Activated B cell treated with CpG ODN at 0.5 μM for 24 hours (primary cell): ENCODE measurements at regions of chr2 and their contacts with region 1.

Region 1: DNA sequence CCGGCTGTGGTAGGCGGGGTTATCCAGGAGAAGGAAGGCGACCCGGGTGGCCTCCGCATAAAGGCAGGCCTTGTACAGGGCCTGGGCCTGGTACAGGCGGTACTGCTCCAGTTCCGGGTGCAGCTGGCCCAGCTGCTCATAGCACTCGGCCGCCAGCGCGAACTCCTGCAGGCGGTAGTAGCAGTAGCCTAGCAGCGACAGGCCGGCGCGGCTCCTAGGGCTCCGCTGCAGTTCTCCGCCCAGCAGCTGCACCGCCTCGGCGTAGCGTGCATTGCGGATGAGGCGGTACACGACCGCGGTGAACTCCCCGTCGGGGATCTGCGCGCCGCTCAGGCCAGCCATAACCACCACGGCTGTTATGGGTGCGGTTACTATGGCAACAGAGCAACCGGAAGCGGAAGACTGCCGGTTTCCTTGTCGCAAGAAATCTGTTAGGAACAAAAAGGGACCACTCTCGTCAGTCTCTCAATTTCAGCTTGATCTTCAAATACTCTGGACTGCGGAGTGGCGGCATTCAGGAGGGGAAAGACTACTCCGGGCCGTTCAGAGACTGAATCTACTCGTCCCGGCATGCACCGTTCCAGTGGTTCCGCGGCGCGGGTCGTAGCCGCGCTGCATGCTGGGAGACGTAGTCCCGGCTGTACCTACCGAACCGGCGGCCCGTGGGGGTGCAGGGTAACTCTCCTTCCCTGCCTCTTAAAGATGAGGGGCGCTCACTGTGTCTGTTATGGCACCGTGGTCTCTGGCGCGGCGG is 160.0 kb downstream of the AGPS start:
- DNase-seq: peak; percentile 87
- ATAC-seq: peak; percentile 90
- H3K4me3 Mint-ChIP-seq: peak overlapping the region; percentile 96
- H3K27ac Mint-ChIP-seq: peak overlapping the region; percentile 100
- H3K4me1 Mint-ChIP-seq: peaks cover 17% of the 10 kb centered on the region
- H3K27me3 Mint-ChIP-seq: no peaks in the 10 kb centered on the region
- CTCF ChIP-seq: no peak

Region 2: DNA sequence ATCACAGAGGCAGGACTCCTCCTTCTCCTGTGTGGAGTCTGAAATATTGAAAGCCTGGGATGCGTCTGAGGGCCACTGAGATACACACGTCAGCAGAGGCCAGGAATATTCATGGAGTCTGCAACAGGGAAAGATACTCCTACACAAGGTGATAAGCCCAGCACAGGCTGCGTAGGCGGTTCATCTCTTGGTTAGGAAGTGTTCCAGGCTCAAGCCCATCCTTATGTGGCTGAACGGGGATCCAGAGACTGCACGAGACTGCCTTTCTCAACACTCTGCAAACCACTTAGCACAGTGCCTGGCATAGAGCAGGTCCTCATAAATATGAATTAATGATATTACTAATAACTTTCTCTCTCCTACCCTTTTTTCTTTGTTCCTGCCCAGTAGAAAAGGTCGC is 189.3 kb before region 1 on chr2:
- CTCF ChIA-PET with region 1: no interaction called
- POLR2A ChIA-PET with region 1: no interaction called
- intact Hi-C with region 1: no loop called
- DNase-seq: no peak
- ATAC-seq: no peak
- H3K4me3 Mint-ChIP-seq: no peak overlapping the region
- H3K27ac Mint-ChIP-seq: no peak overlapping the region
- H3K4me1 Mint-ChIP-seq: no peaks in the 10 kb centered on the region
- H3K27me3 Mint-ChIP-seq: no peaks in the 10 kb centered on the region
- CTCF ChIP-seq: no peak

Region 3: GRCh38 chr2:177392373-177393202 is 160.0 kb before region 1 on chr2 and contains the start of gene AGPS:
- CTCF ChIA-PET with region 1: no interaction called
- POLR2A ChIA-PET with region 1: interaction called, 3 read pairs
- intact Hi-C with region 1: loop called (anchors 2 kb)
- DNase-seq: peak; percentile 66
- ATAC-seq: peak; percentile 93
- H3K4me3 Mint-ChIP-seq: peak within 1 kb of the TSS; percentile 92
- H3K27ac Mint-ChIP-seq: peak within 1 kb of the TSS; percentile 69
- H3K4me1 Mint-ChIP-seq: peaks cover 42% of the 10 kb centered on the region
- H3K27me3 Mint-ChIP-seq: no peaks in the 10 kb centered on the region
- CTCF ChIP-seq: no peak
- total RNA-seq, gene AGPS: 29.0 and 29.9 TPM in 2 replicates

Region 4: GRCh38 chr2:177618255-177619253 is 66.0 kb after region 1 on chr2:
- CTCF ChIA-PET with region 1: no interaction called
- POLR2A ChIA-PET with region 1: no interaction called
- intact Hi-C with region 1: loop called (anchors 1 kb)
- DNase-seq: peak; percentile 87
- ATAC-seq: peak; percentile 89
- H3K4me3 Mint-ChIP-seq: peak overlapping the region; percentile 97
- H3K27ac Mint-ChIP-seq: peak overlapping the region; percentile 100
- H3K4me1 Mint-ChIP-seq: peaks cover 7% of the 10 kb centered on the region
- H3K27me3 Mint-ChIP-seq: peaks cover 3% of the 10 kb centered on the region
- CTCF ChIP-seq: no peak

Region 5: GRCh38 chr2:177629357-177630024 is 76.9 kb after region 1 on chr2:
- CTCF ChIA-PET with region 1: no interaction called
- POLR2A ChIA-PET with region 1: interaction called, 3 read pairs
- intact Hi-C with region 1: loop called (anchors 1 kb)
- DNase-seq: no peak
- ATAC-seq: no peak
- H3K4me3 Mint-ChIP-seq: no peak overlapping the region
- H3K27ac Mint-ChIP-seq: no peak overlapping the region
- H3K4me1 Mint-ChIP-seq: peaks cover 16% of the 10 kb centered on the region
- H3K27me3 Mint-ChIP-seq: no peaks in the 10 kb centered on the region
- CTCF ChIP-seq: no peak

Region 6: GRCh38 chr2:178530625-178531142 is 978.1 kb after region 1 on chr2:
- CTCF ChIA-PET with region 1: no interaction called
- POLR2A ChIA-PET with region 1: no interaction called
- intact Hi-C with region 1: loop called (anchors 2 kb)
- DNase-seq: peak; percentile 43
- ATAC-seq: peak; percentile 95
- H3K4me3 Mint-ChIP-seq: peak overlapping the region; percentile 81
- H3K27ac Mint-ChIP-seq: peak overlapping the region; percentile 91
- H3K4me1 Mint-ChIP-seq: peaks cover 57% of the 10 kb centered on the region
- H3K27me3 Mint-ChIP-seq: no peaks in the 10 kb centered on the region
- CTCF ChIP-seq: no peak